Right lobe of liver (tissue), 6 donors: ENCODE measurements at regions of chr1 and their contacts with region 1.

Region 1: GRCh38 chr1:2025534-2025981 is 6.4 kb downstream of the GABRD start:
- DNase-seq: peak in 1 of 3 donors; percentile 55
- ATAC-seq: peak; percentile 62 to 84 (median 68)
- H3K4me3 ChIP-seq: no peak overlapping the region
- H3K27ac ChIP-seq: peak overlapping the region in 2 of 3 donors; percentile 29 to 51
- H3K4me1 ChIP-seq: no peaks in the 10 kb centered on the region
- H3K27me3 ChIP-seq: no peaks in the 10 kb centered on the region
- CTCF ChIP-seq: no peak
- POLR2A ChIP-seq: no peak

Region 2: GRCh38 chr1:1873186-1873585 is 152.4 kb before region 1 on chr1:
- intact Hi-C with region 1: no loop called
- DNase-seq: peak in 2 of 3 donors; percentile 80 to 85
- ATAC-seq: peak; percentile 55 to 93 (median 74)
- H3K4me3 ChIP-seq: no peak overlapping the region
- H3K27ac ChIP-seq: no peak overlapping the region
- H3K4me1 ChIP-seq: peaks cover 0 to 32% (median 13%) of the 10 kb centered on the region in 4 donors
- H3K27me3 ChIP-seq: no peaks in the 10 kb centered on the region
- CTCF ChIP-seq: no peak
- POLR2A ChIP-seq: no peak

Region 3: DNA sequence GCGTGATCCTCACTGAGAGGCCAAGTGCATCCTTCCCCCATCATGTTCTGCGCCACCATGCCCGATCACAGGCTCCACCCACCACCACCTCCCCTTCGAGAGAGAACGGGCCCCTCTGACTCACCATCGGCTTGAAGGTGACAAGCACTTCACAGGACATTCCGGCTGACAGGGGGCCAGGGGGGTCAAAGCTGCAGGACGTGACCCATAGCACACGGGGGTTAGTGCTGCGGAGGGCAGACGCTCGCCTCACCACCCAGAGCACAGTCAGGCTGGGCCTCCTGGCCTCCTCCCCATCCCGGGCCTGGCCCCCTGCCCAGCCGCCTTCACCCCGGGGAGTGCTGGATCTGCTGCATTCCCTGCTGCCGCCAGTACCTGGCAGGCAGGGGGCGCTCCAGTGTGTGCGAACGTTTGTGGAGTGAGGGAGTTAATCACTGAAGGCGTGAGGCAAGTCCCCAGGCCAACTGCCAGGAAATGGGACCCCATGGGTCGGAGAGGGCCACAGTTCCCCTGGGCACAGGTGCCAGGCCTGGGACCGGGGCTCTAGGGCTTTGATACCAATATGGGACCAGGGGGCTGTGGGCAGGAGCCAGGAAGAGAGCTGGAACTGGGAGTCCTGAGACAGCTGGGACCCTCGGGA is 65.6 kb before region 1 on chr1:
- intact Hi-C with region 1: loop called in 1 of 2 experiments (anchors 10 kb)
- DNase-seq: peak; percentile 86 to 90 (median 87)
- ATAC-seq: peak; percentile 79 to 89 (median 88)
- H3K4me3 ChIP-seq: no peak overlapping the region
- H3K27ac ChIP-seq: no peak overlapping the region
- H3K4me1 ChIP-seq: no peaks in the 10 kb centered on the region
- H3K27me3 ChIP-seq: no peaks in the 10 kb centered on the region
- CTCF ChIP-seq: peak; percentile 81 to 91 (median 86)
- POLR2A ChIP-seq: no peak

Region 4: GRCh38 chr1:2088458-2088857 is 62.9 kb after region 1 on chr1:
- intact Hi-C with region 1: no loop called
- DNase-seq: no peak
- ATAC-seq: peak in 1 of 4 donors; percentile 23
- H3K4me3 ChIP-seq: no peak overlapping the region
- H3K27ac ChIP-seq: no peak overlapping the region
- H3K4me1 ChIP-seq: no peaks in the 10 kb centered on the region
- H3K27me3 ChIP-seq: no peaks in the 10 kb centered on the region
- CTCF ChIP-seq: no peak
- POLR2A ChIP-seq: no peak